Panc1 (cell line): ENCODE measurements at regions of chr18 and their contacts with region 1.

Region 1: DNA sequence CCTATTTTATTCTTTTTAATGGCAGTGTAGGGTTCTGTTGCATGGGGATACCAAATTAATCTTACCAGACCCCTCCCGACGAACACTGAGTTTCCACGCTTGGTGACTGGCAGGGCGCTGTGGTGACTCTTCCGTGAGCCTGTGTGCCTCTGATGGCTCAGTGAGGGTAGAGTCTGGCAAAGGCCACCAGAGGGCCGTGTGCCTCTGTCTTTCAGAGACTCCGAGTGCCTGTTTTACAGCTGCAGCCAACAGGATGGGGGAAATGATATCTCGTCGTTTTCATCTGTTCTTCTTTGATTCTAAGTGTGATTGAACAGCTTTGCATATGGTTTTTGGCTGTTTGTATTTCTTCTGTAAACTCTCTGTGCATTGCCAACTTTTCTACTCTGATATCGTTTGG is 99.8 kb downstream of the ZNF236 start:
- DNase-seq: peak; percentile 22
- ATAC-seq: peak; percentile 96
- H3K4me3 ChIP-seq: no peak overlapping the region
- H3K27ac ChIP-seq: no peak overlapping the region
- H3K4me1 ChIP-seq: no peaks in the 10 kb centered on the region
- H3K27me3 ChIP-seq: no peaks in the 10 kb centered on the region
- CTCF ChIP-seq: peak; percentile 87

Region 2: GRCh38 chr18:76349067-76349715 is 572.9 kb before region 1 on chr18:
- CTCF ChIA-PET with region 1: no interaction called
- POLR2A ChIA-PET with region 1: interaction called, 11 read pairs
- in situ Hi-C with region 1: no loop called
- intact Hi-C with region 1: no loop called
- DNase-seq: peak; percentile 55
- ATAC-seq: peak; percentile 65
- H3K4me3 ChIP-seq: peak overlapping the region; percentile 20 to 44
- H3K27ac ChIP-seq: no peak overlapping the region
- H3K4me1 ChIP-seq: peaks cover 18% of the 10 kb centered on the region
- H3K27me3 ChIP-seq: no peaks in the 10 kb centered on the region
- CTCF ChIP-seq: no peak

Region 3: DNA sequence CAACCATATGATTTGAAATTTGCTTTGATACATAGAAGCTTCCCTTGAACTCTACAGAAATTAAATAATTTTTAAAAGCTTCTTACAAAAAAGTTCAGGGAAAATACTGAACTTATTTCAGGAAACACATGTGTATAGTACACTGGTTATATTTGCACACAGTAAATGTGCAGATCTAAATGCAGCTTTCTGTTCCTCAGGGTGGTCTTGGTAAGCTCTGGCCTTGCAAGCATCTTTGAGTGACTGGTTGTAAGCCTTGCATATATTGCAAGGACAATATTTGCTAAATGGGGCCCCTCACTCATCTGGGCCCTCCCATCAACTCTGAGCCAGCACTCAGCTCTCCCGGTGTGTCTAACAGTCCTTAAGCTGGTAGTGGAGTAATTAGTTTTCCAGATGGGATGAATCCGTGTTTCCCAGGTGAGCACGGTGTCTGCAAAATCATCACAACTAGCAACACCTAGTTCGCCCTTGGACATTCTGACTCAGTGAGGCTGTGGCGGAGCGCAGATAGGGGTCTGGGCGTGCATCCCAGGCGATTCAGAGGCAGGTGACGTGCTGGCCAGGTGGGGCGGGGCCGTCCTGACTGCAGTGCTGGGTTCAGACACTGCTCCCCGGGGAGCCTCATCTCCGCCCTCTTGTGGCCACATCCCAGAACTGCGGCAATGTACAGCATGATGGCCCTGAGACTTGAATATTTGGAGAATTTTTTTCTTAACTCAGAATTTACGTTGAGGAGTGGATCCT is 60.9 kb after region 1 on chr18:
- CTCF ChIA-PET with region 1: interaction called, 6 read pairs
- POLR2A ChIA-PET with region 1: no interaction called
- in situ Hi-C with region 1: no loop called
- intact Hi-C with region 1: loop called (anchors 5 kb)
- DNase-seq: peak; percentile 70
- ATAC-seq: peak; percentile 94
- H3K4me3 ChIP-seq: peak overlapping the region in 1 of 2 experiments; percentile 22; a peak in 2 of 4 replicates
- H3K27ac ChIP-seq: no peak overlapping the region; the same call in 1 of the 2 replicates
- H3K4me1 ChIP-seq: peaks cover 6% of the 10 kb centered on the region
- H3K27me3 ChIP-seq: no peaks in the 10 kb centered on the region
- CTCF ChIP-seq: no peak

Region 4: DNA sequence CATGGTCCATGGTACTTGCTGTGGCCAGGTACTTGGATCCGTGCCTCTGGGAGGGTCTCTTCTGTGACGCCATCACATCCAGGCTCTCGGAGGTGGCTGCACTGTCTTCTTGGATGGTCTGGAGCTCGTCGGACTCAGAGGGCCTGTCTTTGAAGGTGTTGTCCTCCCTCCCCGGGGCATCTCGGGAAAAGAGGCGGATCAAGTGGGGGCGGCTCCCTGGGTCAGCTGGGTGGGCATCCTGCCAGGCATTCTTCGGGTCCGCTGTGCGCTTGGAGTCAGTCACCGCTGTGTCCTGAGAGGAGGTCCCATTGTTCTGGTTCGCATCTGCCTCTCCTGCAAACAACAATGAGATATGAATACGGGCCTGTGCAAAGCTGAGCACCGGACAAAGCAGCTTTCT is 94.8 kb after region 1 on chr18:
- CTCF ChIA-PET with region 1: interaction called, 32 read pairs
- POLR2A ChIA-PET with region 1: no interaction called
- in situ Hi-C with region 1: no loop called
- intact Hi-C with region 1: no loop called
- DNase-seq: no peak
- ATAC-seq: no peak
- H3K4me3 ChIP-seq: no peak overlapping the region
- H3K27ac ChIP-seq: no peak overlapping the region
- H3K4me1 ChIP-seq: no peaks in the 10 kb centered on the region; the same call in 1 of the 2 replicates
- H3K27me3 ChIP-seq: no peaks in the 10 kb centered on the region
- CTCF ChIP-seq: no peak

Region 5: DNA sequence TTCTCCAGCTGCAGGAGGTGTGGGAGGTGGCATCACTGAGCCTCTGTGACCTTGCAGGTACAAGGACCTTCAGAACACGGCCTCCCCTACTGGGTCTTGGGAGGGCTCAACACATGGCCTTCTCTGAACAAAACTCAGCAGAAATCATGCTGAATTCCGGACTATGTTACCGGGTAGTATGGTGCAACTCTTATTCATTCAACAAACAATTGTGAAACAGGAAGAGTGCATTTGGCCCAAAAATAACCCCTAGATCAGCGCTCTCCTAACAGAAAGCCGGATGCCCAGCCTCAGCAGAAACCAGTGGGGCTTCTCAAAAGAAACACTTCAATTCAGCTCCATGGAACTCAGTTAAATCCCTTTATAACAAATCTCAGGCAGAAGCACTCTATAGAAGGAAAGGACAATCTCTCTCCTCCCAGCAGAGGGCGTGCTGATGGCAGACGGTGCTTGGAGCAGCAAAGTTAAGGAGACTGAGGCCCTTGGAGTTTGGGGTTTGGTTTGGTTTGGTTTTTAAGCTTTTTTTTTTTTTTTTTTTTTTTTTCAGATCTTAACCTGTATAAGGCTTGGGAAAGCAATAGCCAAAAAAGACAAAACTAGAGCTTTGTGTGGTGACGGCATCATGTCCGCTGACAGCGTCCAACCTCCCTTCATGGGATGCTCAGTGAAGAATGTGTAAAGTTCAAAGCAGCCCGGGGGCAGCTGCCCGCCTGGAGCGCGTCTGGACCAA is 1953.3 kb after region 1 on chr18:
- CTCF ChIA-PET with region 1: interaction called, 12 read pairs
- POLR2A ChIA-PET with region 1: no interaction called
- in situ Hi-C with region 1: no loop called
- intact Hi-C with region 1: no loop called
- DNase-seq: peak; percentile 22
- ATAC-seq: peak; percentile 77
- H3K4me3 ChIP-seq: no peak overlapping the region
- H3K27ac ChIP-seq: no peak overlapping the region
- H3K4me1 ChIP-seq: no peaks in the 10 kb centered on the region
- H3K27me3 ChIP-seq: peaks cover 28% of the 10 kb centered on the region
- CTCF ChIP-seq: peak; percentile 92